Naive thymus-derived CD4-positive, alpha-beta T cell (primary cell): ENCODE measurements at regions of chr19 and their contacts with region 1.

Region 1: GRCh38 chr19:13155472-13156359 is 5.5 kb downstream of the IER2 start:
- DNase-seq: peak; percentile 65 to 86 (median 75)
- ATAC-seq: peak; percentile 43
- H3K4me3 ChIP-seq: peak overlapping the region; percentile 96
- H3K4me3 Mint-ChIP-seq: peak overlapping the region; percentile 94 to 100 (median 98)
- H3K27ac ChIP-seq: peak overlapping the region; percentile 96
- H3K27ac Mint-ChIP-seq: peak overlapping the region; percentile 97 to 100 (median 99)
- H3K4me1 ChIP-seq: peaks cover 14 to 29% of the 10 kb centered on the region in 2 donors
- H3K4me1 Mint-ChIP-seq: peaks cover 22 to 63% (median 39%) of the 10 kb centered on the region in 7 donors
- H3K27me3 ChIP-seq: no peaks in the 10 kb centered on the region
- H3K27me3 Mint-ChIP-seq: peaks cover 0 to 17% (median 0%) of the 10 kb centered on the region in 5 donors

Region 2: GRCh38 chr19:12890787-12891552 is 264.7 kb before region 1 on chr19 and contains the start of gene GCDH:
- CTCF ChIA-PET with region 1: no interaction called
- POLR2A ChIA-PET with region 1: no interaction called
- intact Hi-C with region 1: no loop called
- DNase-seq: peak; percentile 77 to 98 (median 96)
- ATAC-seq: peak; percentile 97
- H3K4me3 ChIP-seq: peak within 1 kb of the TSS; percentile 87
- H3K4me3 Mint-ChIP-seq: peak within 1 kb of the TSS; percentile 91 to 100 (median 99)
- H3K27ac ChIP-seq: peak within 1 kb of the TSS; percentile 83
- H3K27ac Mint-ChIP-seq: peak within 1 kb of the TSS; percentile 94 to 99 (median 98)
- H3K4me1 ChIP-seq: peaks cover 5 to 15% of the 10 kb centered on the region in 2 donors
- H3K4me1 Mint-ChIP-seq: peaks cover 16 to 41% (median 30%) of the 10 kb centered on the region in 7 donors
- H3K27me3 ChIP-seq: no peaks in the 10 kb centered on the region
- H3K27me3 Mint-ChIP-seq: peaks cover 0 to 6% (median 0%) of the 10 kb centered on the region in 5 donors
- total RNA-seq, gene GCDH: 40.1 to 74.2 (median 54.5) TPM

Region 3: DNA sequence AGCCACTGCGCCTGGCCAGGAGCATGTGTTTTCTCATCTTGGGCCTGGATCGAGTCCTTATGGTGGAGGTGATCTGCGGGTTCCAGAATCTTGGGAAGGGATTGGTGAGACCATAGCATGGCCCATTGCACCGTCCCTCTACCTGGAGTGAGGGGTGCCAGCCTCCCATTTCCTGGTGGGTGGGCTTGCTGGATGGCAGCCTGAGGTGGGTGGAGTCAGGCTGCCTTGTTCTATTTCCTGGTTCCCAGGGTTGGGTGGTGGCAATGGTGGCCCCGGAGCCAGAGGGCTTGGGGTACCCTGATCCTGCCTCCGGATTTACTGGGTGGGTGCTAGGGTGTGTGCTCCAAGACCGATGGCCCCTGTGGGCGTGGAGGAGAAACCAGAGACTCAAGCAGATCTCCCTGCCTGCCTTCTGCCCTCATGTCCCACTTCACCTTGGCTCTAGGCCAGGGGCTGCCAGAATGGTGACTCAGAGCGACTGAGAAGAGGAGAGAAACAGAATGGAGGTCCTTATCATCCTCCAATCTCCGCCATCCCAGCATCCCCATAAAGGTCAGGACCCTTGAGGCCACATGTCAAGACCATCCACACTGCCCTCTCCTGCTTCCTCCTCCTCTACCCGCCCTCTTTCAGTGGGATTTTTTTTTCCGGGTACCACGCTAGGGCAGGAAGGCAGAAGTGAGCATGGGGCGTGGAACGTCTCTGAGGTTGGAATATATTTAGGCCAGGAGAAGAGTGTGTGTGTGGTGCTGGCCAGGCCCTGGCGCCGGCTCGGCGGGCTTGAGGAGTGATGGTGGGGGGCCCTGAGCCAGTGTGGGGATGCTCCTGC is 16.6 kb after region 1 on chr19:
- CTCF ChIA-PET with region 1: interaction called, 14 read pairs
- POLR2A ChIA-PET with region 1: interaction called, 283 read pairs
- intact Hi-C with region 1: loop called (anchors 1 kb)
- DNase-seq: peak; percentile 46 to 80 (median 55)
- ATAC-seq: peak; percentile 14
- H3K4me3 ChIP-seq: peak overlapping the region; percentile 41
- H3K4me3 Mint-ChIP-seq: peak overlapping the region; percentile 79 to 90 (median 84)
- H3K27ac ChIP-seq: peak overlapping the region; percentile 76
- H3K27ac Mint-ChIP-seq: peak overlapping the region; percentile 92 to 100 (median 98)
- H3K4me1 ChIP-seq: peaks cover 57 to 64% of the 10 kb centered on the region in 2 donors
- H3K4me1 Mint-ChIP-seq: peaks cover 40 to 75% (median 59%) of the 10 kb centered on the region in 7 donors
- H3K27me3 ChIP-seq: no peaks in the 10 kb centered on the region
- H3K27me3 Mint-ChIP-seq: no peaks in the 10 kb centered on the region

Region 4: GRCh38 chr19:13181747-13182388 is 26.2 kb after region 1 on chr19:
- CTCF ChIA-PET with region 1: interaction called, 15 read pairs
- POLR2A ChIA-PET with region 1: interaction called, 263 read pairs
- intact Hi-C with region 1: no loop called
- DNase-seq: no peak
- ATAC-seq: peak; percentile 71
- H3K4me3 ChIP-seq: no peak overlapping the region
- H3K4me3 Mint-ChIP-seq: peak overlapping the region in 8 of 10 donors; percentile 24 to 71 (median 62)
- H3K27ac ChIP-seq: no peak overlapping the region
- H3K27ac Mint-ChIP-seq: peak overlapping the region; percentile 20 to 86 (median 76)
- H3K4me1 ChIP-seq: peaks cover 20 to 21% of the 10 kb centered on the region in 2 donors
- H3K4me1 Mint-ChIP-seq: peaks cover 14 to 43% (median 38%) of the 10 kb centered on the region in 7 donors
- H3K27me3 ChIP-seq: no peaks in the 10 kb centered on the region
- H3K27me3 Mint-ChIP-seq: no peaks in the 10 kb centered on the region